ENCODE measurements at regions of chr1 and their contacts with region 1.

Region 1: DNA sequence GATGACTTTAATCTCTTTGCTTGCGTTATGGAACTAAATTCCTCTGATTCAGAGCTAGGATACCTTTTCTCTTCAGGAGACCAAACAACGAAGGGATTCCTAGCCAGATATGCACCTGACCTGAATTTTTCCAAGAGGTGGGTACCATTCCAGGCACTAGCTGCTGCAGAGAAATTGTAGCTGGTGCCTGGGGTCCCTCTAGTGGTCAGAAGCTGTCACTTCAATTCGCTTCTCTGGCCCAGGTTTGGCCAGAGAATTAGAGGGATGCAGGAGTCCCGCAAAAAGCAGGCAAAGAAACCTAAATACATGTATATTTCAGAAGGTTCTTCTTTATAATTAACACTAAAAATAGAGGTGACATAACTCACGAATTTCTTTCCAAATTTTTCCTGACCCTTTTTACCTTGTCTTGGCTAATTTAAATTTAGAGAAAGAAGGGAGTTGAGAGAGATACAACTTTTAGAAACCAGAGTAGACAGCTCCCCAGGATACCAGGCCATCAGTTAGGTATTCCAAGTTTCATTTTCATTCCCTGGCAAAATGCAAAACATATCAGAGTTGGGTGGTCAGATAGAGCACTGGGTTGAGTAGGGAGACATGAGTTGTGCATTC is 9.6 kb downstream of the ACKR1 start:
- DNase-seq: peak; percentile 59
- H3K4me3 Mint-ChIP-seq: no peak overlapping the region
- H3K27ac Mint-ChIP-seq: no peak overlapping the region
- H3K4me1 Mint-ChIP-seq: peaks cover 2% of the 10 kb centered on the region
- H3K27me3 Mint-ChIP-seq: peaks cover 48% of the 10 kb centered on the region

Region 2: GRCh38 chr1:158951956-158952355 is 262.3 kb before region 1 on chr1:
- CTCF ChIA-PET with region 1: no interaction called
- intact Hi-C with region 1: no loop called
- DNase-seq: no peak
- H3K4me3 Mint-ChIP-seq: no peak overlapping the region
- H3K27ac Mint-ChIP-seq: no peak overlapping the region
- H3K4me1 Mint-ChIP-seq: no peaks in the 10 kb centered on the region
- H3K27me3 Mint-ChIP-seq: no peaks in the 10 kb centered on the region

Region 3: DNA sequence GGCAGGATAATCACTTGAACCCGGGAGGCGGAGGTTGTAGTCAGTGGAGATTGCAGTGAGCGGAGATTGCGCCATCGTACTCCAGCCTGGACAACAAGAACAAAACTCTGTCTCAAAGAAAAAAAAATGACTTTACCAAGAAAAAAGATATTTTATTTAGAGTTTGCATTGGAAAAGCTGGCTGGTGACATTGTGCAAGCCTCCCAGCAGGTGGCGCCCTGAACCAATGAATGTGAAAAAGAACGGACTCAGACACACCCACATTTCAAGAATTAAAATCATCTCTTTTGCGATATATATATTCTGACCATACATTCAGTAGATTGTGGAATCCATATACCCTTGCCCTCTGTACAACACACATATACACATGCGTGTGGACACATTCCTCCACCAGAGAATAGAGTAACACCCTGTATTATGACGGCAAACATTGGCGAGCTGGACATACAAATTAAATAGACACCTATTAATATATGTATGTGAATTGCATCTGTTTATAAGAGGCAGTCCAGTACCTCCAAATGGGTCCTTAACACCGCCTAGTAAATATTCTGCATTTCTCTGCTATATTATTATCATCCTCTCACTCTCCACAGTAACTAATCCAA is 81.9 kb before region 1 on chr1:
- CTCF ChIA-PET with region 1: interaction called, 225 read pairs
- intact Hi-C with region 1: loop called (anchors 1 kb)
- DNase-seq: peak; percentile 84
- H3K4me3 Mint-ChIP-seq: no peak overlapping the region
- H3K27ac Mint-ChIP-seq: no peak overlapping the region
- H3K4me1 Mint-ChIP-seq: no peaks in the 10 kb centered on the region
- H3K27me3 Mint-ChIP-seq: peaks cover 6% of the 10 kb centered on the region

Region 4: GRCh38 chr1:159161001-159161718 is 53.1 kb before region 1 on chr1:
- CTCF ChIA-PET with region 1: interaction called, 150 read pairs
- intact Hi-C with region 1: loop called (anchors 1 kb)
- DNase-seq: peak; percentile 80
- H3K4me3 Mint-ChIP-seq: no peak overlapping the region
- H3K27ac Mint-ChIP-seq: no peak overlapping the region
- H3K4me1 Mint-ChIP-seq: no peaks in the 10 kb centered on the region
- H3K27me3 Mint-ChIP-seq: peaks cover 43% of the 10 kb centered on the region

Region 5: DNA sequence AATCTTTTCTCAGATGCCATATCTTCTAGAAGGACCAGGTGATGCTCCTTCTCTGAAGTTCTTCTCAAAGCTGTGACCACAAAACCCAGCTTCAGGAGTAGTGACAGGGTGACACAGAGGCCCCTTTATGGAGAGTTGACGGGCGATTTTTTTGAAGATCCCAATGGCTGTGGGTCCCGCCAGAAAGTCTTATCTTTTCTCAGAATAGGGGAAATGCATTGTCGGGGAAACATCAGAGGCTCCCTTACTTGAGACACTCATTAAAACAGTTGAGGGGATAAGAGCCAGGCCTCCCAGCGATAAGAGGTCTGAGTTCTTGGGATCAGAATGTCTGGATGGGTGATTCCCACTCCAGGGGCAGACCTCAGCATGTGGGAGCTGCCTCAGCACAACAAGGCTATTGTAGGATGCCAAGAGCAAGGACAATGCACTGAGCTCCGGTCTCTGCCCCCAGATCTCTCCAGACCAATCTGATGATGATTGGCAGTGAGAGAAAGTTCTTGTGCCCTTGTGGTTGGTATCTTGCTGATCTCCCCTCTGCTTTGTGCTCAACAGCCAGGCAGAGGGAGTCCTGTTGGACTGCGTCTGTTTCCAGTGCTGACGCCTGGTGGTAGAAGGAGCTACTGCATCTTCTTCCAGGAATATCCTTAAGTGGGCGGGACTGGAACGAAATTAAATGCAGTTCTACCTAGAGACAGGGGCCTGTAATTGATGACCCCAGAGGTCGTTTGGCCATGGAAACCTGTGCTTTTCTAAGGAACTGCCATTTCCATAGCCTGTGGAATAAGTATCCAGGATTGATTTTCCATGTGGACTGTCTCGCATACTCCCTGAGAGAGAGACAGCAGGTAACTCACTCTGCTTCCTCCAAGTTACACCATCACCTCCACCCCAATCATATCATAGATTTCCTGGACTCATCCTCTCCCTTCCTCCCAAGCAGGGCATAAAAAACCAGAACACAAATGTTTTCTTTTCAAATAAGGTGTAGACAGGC is 16.4 kb before region 1 on chr1:
- CTCF ChIA-PET with region 1: interaction called, 34 read pairs
- intact Hi-C with region 1: no loop called
- DNase-seq: peak; percentile 76
- H3K4me3 Mint-ChIP-seq: no peak overlapping the region
- H3K27ac Mint-ChIP-seq: no peak overlapping the region
- H3K4me1 Mint-ChIP-seq: peaks cover 5% of the 10 kb centered on the region
- H3K27me3 Mint-ChIP-seq: peaks cover 47% of the 10 kb centered on the region

Region 6: DNA sequence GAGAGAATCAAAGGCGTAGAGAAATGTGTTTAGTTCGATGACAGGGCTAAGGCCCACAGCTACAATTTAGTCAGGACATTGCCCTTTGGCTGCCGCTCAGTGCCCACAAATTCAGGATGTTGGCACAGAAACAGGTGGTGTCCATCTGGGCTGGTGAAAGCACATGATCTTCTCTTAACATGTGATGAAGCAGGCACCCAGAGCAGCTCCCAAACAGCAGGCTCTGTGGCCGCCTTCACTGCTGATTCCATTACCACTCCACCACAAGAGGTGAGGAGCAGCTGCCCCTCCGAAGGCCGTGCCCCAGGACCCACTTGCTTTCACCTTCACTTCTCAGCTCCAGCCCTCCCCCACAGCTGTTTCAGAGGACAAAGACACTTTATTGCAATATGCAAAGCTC is 15.2 kb after region 1 on chr1:
- CTCF ChIA-PET with region 1: interaction called, 28 read pairs
- intact Hi-C with region 1: no loop called
- DNase-seq: no peak
- H3K4me3 Mint-ChIP-seq: no peak overlapping the region
- H3K27ac Mint-ChIP-seq: no peak overlapping the region
- H3K4me1 Mint-ChIP-seq: no peaks in the 10 kb centered on the region
- H3K27me3 Mint-ChIP-seq: peaks cover 15% of the 10 kb centered on the region

Region 7: DNA sequence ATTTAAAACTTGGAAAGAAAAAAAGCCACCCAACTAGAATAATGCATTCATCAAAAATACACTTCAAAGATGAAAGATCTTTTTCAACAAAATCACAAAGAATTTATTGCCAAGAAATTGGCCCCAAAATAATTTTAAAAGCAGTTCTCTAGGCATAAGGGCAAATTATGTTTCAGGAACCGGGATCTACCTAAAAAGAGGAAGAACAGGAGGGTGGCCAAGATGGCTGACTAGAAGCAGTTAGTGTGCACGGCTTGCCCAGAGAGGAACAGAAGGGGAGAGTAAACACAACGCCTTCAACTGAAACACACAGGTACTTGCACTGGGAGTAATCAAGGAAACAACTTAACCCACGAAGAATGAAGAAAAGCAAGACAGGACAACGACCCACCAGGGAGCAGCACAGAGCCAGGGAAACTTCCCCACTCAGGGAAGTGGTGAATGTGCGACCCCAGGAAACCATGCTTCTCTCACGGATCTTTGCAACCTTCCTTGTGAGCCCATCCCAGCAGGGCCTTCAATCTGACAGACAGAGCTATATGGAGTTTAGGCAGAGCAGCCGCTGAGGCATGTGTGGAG is 36.5 kb after region 1 on chr1:
- CTCF ChIA-PET with region 1: interaction called, 10 read pairs
- intact Hi-C with region 1: no loop called
- DNase-seq: no peak
- H3K4me3 Mint-ChIP-seq: no peak overlapping the region
- H3K27ac Mint-ChIP-seq: no peak overlapping the region
- H3K4me1 Mint-ChIP-seq: no peaks in the 10 kb centered on the region
- H3K27me3 Mint-ChIP-seq: peaks cover 26% of the 10 kb centered on the region